Sciatic nerve (tissue), 2 donors: ENCODE measurements at regions of chr15 and their contacts with region 1.

Region 1: DNA sequence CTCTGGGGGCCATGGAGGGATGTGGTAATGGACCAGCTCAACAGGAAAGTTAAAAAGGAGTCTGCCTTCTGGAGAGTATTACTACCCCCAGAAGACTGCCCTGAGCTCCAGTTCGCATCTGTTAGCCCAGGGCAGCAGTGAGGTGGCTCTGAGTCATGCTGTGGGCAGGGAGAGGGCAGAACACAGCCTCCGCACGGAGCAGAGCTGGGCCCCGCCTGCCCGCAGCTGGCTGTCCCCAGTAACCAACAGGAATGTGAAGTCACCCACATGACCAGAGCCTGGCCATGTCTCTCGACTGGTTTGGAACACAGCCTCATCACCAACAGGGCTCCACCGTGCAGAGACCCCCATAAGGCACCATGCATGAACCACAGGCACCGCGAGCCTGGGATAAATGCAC is 62.1 kb downstream of the CYFIP1 start:
- DNase-seq: no peak
- ATAC-seq: no peak

Region 2: GRCh38 chr15:22883191-22883590 is 34.9 kb before region 1 on chr15:
- intact Hi-C with region 1: loop called (anchors 1 kb)
- DNase-seq: no peak
- ATAC-seq: no peak